ENCODE measurements at regions of chr13 and their contacts with region 1.

Region 1: GRCh38 chr13:35393886-35394285 is 82.6 kb downstream of the MAB21L1 start:
- DNase-seq: peak; percentile 79
- H3K4me3 ChIP-seq: no peak overlapping the region
- H3K27ac ChIP-seq: no peak overlapping the region
- H3K4me1 ChIP-seq: peaks cover 34% of the 10 kb centered on the region
- H3K27me3 ChIP-seq: no peaks in the 10 kb centered on the region
- CTCF ChIP-seq: no peak
- POLR2A ChIP-seq: no peak

Region 2: DNA sequence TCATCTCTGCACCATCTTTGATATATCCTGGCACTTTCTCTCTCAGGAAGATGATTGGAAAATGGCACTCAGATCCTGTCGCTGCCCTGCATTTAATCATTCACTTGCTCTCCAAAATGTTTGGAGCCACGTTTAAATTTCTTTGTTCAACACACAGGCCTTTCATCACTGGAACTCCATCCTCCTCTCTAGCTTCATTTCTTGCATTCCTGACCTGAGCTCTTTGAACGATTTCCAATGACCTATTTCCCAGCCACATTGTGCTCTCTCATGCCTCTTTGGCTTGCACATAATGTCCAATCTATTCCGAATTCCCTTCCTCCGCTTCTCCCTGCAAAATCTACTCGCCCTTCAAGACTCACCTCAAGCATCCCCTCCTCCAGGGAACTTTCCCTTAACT is 739.2 kb before region 1 on chr13:
- CTCF ChIA-PET with region 1: no interaction called
- POLR2A ChIA-PET with region 1: no interaction called
- dilution Hi-C with region 1: no loop called
- intact Hi-C with region 1: no loop called
- DNase-seq: no peak
- H3K4me3 ChIP-seq: no peak overlapping the region
- H3K27ac ChIP-seq: no peak overlapping the region
- H3K4me1 ChIP-seq: no peaks in the 10 kb centered on the region
- H3K27me3 ChIP-seq: peaks cover 0 to under 1% of the 10 kb centered on the region in 2 experiments
- CTCF ChIP-seq: no peak
- POLR2A ChIP-seq: no peak

Region 3: DNA sequence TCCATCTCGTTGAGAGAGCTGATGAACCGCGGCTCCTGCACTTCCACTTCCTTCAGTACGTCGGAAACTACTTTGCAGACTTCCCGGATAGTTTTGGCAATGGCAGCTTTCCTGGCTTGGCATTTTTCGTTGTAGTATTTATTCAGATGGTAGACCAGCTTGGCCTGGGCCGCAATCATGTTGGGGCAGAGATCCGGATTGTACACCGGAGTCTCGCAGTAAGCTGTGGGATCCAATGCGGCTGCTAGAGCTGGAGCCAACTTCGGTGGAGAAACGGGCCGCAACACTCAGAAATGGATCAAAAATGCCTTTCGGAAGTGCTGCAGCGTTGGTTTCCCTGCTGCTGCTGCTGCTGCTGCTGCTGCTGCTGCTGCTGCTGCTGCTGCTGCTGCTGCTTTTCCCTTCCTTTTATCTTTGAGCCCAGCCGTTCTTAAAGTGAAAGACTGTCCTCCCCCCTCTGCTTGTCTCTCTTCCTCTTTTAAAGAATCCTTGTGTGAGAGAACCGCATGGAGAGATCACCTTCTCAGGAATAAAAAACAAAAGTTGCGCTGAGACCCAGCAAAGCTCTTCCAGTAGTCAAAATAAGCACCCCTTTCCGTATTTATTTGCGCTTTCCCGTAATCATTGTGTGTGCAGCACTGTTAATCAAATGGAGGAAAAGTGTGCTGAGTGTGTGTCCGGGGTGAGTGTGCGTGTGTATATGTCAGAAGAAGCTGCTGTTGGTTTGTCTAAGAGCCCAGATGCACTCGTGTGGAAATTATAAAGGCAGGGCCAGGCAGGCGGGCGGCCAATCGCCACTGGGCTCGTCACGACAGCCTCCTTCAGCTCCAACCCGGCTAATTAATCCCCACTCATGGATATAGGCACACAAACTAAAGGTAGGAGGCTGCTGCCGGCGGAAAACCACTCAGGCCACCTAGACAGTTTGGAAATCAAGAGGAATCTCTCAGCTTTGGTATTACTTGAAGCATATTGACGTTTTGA is 82.4 kb after region 1 on chr13 and contains the start of gene MAB21L1:
- CTCF ChIA-PET with region 1: no interaction called
- POLR2A ChIA-PET with region 1: no interaction called
- dilution Hi-C with region 1: no loop called
- intact Hi-C with region 1: loop called (anchors 2 kb)
- DNase-seq: peak; percentile 24
- H3K4me3 ChIP-seq: peak within 1 kb of the TSS; percentile 0 to 63 (median 58)
- H3K27ac ChIP-seq: no peak within 1 kb of the TSS
- H3K4me1 ChIP-seq: no peaks in the 10 kb centered on the region
- H3K27me3 ChIP-seq: no peaks in the 10 kb centered on the region
- CTCF ChIP-seq: no peak
- POLR2A ChIP-seq: no peak
- total RNA-seq, gene MAB21L1: not detected in 2 replicates

Region 4: GRCh38 chr13:35603593-35604285 is 209.9 kb after region 1 on chr13:
- CTCF ChIA-PET with region 1: no interaction called
- POLR2A ChIA-PET with region 1: no interaction called
- dilution Hi-C with region 1: no loop called
- intact Hi-C with region 1: no loop called
- DNase-seq: no peak
- H3K4me3 ChIP-seq: no peak overlapping the region
- H3K27ac ChIP-seq: no peak overlapping the region
- H3K4me1 ChIP-seq: no peaks in the 10 kb centered on the region
- H3K27me3 ChIP-seq: no peaks in the 10 kb centered on the region
- CTCF ChIP-seq: no peak
- POLR2A ChIP-seq: no peak

Region 5: GRCh38 chr13:35888457-35888883 is 494.6 kb after region 1 on chr13:
- CTCF ChIA-PET with region 1: no interaction called
- POLR2A ChIA-PET with region 1: no interaction called
- dilution Hi-C with region 1: no loop called
- intact Hi-C with region 1: no loop called
- DNase-seq: no peak
- H3K4me3 ChIP-seq: no peak overlapping the region
- H3K27ac ChIP-seq: no peak overlapping the region
- H3K4me1 ChIP-seq: no peaks in the 10 kb centered on the region
- H3K27me3 ChIP-seq: no peaks in the 10 kb centered on the region
- CTCF ChIP-seq: no peak
- POLR2A ChIP-seq: no peak